ENCODE measurements at regions of chr2 and their contacts with region 1.

Region 1: GRCh38 chr2:205776139-205776538 is 93.8 kb downstream of the NRP2 start:
- DNase-seq: peak; percentile 55
- ATAC-seq: peak; percentile 98
- H3K4me3 ChIP-seq: no peak overlapping the region
- H3K27ac ChIP-seq: no peak overlapping the region
- H3K4me1 ChIP-seq: peaks cover 0 to 3% of the 10 kb centered on the region in 2 experiments; a peak in 1 of 4 replicates
- H3K27me3 ChIP-seq: peaks cover 21% of the 10 kb centered on the region; the same call in 1 of the 2 replicates
- CTCF ChIP-seq: peak; percentile 83 to 92 (median 89)
- POLR2A ChIP-seq: no peak
- RAD21 ChIP-seq: peak; percentile 84

Region 2: GRCh38 chr2:205484764-205485163 is 291.4 kb before region 1 on chr2:
- CTCF ChIA-PET with region 1: no interaction called
- POLR2A ChIA-PET with region 1: no interaction called
- RAD21 ChIA-PET with region 1: no interaction called
- intact Hi-C with region 1: no loop called
- DNase-seq: no peak
- ATAC-seq: no peak
- H3K4me3 ChIP-seq: no peak overlapping the region
- H3K27ac ChIP-seq: no peak overlapping the region
- H3K4me1 ChIP-seq: no peaks in the 10 kb centered on the region
- H3K27me3 ChIP-seq: peaks cover 4% of the 10 kb centered on the region; the same call in 1 of the 2 replicates
- CTCF ChIP-seq: no peak
- POLR2A ChIP-seq: no peak
- RAD21 ChIP-seq: no peak

Region 3: GRCh38 chr2:205612636-205613035 is 163.5 kb before region 1 on chr2:
- CTCF ChIA-PET with region 1: no interaction called
- POLR2A ChIA-PET with region 1: no interaction called
- RAD21 ChIA-PET with region 1: no interaction called
- intact Hi-C with region 1: no loop called
- DNase-seq: no peak
- ATAC-seq: no peak
- H3K4me3 ChIP-seq: no peak overlapping the region
- H3K27ac ChIP-seq: no peak overlapping the region
- H3K4me1 ChIP-seq: no peaks in the 10 kb centered on the region
- H3K27me3 ChIP-seq: peaks cover 41% of the 10 kb centered on the region
- CTCF ChIP-seq: no peak
- POLR2A ChIP-seq: no peak
- RAD21 ChIP-seq: no peak

Region 4: DNA sequence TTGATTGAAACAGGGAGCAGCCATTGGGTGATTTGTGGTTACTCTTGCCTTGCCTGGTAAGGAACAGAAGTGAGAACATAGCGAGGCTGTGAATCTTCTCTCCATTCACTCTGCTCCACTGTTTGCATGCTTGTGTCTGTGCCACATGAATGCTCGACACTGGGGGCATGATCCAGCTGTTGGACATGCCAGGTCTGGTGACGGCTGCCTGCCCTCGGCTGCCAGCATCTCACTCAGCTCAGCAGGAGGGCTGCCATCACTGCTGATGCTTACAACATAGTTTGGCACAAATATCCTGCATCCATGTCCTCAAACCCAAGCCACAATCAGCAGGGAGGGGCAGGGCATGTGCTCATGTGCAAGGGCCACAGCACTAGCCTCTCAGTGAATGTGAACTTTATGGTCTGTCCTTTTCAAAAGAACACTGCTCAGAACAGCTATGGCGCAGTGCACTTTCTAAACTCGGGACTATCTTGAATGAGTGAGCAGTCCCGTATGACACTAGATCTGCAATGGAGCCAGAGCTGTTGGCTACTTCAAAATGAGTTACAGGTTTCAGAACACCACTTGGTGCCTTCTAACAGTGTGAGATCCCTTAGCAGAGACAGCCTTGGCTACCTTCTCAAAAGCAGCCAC is 32.5 kb after region 1 on chr2:
- CTCF ChIA-PET with region 1: no interaction called
- POLR2A ChIA-PET with region 1: no interaction called
- RAD21 ChIA-PET with region 1: no interaction called
- intact Hi-C with region 1: loop called (anchors 1 kb)
- DNase-seq: no peak
- ATAC-seq: no peak
- H3K4me3 ChIP-seq: no peak overlapping the region
- H3K27ac ChIP-seq: no peak overlapping the region
- H3K4me1 ChIP-seq: no peaks in the 10 kb centered on the region
- H3K27me3 ChIP-seq: 0 out of 2 replicates have a peak, but pooled peaks cover 5% of the 10 kb centered on the region
- CTCF ChIP-seq: no peak
- POLR2A ChIP-seq: no peak
- RAD21 ChIP-seq: no peak

Region 5: DNA sequence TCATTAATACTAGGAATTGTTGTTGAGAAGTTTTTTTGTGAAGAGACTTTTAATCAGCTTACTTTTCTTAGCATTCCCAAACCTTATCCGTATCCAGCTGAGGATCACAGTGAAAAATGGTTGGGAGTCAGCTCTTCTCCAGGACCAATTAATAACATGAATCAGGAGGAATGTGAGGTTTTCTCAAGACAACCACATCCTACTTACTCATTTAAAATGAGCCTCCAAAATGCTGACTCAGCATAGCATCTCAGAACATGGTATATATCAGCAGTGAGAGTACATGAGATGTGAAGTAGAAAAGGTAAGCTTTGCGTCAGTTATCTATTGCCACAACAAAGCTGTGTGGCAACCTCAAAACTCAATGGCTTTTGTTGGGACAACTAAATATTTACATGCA is 46.4 kb after region 1 on chr2:
- CTCF ChIA-PET with region 1: no interaction called
- POLR2A ChIA-PET with region 1: no interaction called
- RAD21 ChIA-PET with region 1: no interaction called
- intact Hi-C with region 1: no loop called
- DNase-seq: no peak
- ATAC-seq: no peak
- H3K4me3 ChIP-seq: no peak overlapping the region
- H3K27ac ChIP-seq: no peak overlapping the region
- H3K4me1 ChIP-seq: no peaks in the 10 kb centered on the region
- H3K27me3 ChIP-seq: no peaks in the 10 kb centered on the region; the same call in 1 of the 2 replicates
- CTCF ChIP-seq: no peak
- POLR2A ChIP-seq: no peak
- RAD21 ChIP-seq: no peak

Region 6: DNA sequence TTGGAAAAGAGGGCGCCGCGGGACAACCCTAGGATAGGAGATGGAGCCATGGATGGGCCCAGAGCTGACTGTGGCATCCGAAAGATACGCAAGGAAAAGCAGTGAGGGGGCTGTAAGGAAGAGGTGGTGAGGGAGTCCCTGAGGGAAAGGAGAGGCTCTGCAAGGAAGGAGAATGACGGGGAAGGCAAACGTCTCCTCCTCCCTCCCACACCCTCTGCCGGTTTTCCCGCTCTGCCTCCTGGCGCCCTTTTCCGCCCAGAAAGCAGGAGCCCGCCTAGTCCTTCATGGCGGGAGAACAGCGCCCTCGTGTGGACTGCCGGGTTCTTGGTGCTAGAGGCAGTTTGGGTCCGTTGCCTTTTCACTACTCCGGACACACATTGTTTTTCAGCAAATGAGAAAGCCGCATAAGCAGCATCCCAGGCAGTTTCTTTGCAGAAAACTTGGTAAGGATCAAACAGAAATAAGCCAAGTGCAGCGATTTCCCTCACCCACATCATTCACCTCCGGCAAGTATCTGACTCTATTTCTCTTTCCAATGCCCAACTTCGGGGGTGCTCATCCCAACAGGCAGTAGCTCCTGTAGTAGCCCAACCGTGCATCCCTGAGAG is 109.5 kb after region 1 on chr2:
- CTCF ChIA-PET with region 1: interaction called, 8 read pairs
- POLR2A ChIA-PET with region 1: no interaction called
- RAD21 ChIA-PET with region 1: no interaction called
- intact Hi-C with region 1: loop called (anchors 1 kb)
- DNase-seq: peak; percentile 68
- ATAC-seq: peak; percentile 99
- H3K4me3 ChIP-seq: no peak overlapping the region
- H3K27ac ChIP-seq: no peak overlapping the region
- H3K4me1 ChIP-seq: peaks cover 0 to 3% of the 10 kb centered on the region in 2 experiments; a peak in 2 of 4 replicates
- H3K27me3 ChIP-seq: no peaks in the 10 kb centered on the region
- CTCF ChIP-seq: peak; percentile 92 to 97 (median 94)
- POLR2A ChIP-seq: no peak
- RAD21 ChIP-seq: peak; percentile 94

Region 7: DNA sequence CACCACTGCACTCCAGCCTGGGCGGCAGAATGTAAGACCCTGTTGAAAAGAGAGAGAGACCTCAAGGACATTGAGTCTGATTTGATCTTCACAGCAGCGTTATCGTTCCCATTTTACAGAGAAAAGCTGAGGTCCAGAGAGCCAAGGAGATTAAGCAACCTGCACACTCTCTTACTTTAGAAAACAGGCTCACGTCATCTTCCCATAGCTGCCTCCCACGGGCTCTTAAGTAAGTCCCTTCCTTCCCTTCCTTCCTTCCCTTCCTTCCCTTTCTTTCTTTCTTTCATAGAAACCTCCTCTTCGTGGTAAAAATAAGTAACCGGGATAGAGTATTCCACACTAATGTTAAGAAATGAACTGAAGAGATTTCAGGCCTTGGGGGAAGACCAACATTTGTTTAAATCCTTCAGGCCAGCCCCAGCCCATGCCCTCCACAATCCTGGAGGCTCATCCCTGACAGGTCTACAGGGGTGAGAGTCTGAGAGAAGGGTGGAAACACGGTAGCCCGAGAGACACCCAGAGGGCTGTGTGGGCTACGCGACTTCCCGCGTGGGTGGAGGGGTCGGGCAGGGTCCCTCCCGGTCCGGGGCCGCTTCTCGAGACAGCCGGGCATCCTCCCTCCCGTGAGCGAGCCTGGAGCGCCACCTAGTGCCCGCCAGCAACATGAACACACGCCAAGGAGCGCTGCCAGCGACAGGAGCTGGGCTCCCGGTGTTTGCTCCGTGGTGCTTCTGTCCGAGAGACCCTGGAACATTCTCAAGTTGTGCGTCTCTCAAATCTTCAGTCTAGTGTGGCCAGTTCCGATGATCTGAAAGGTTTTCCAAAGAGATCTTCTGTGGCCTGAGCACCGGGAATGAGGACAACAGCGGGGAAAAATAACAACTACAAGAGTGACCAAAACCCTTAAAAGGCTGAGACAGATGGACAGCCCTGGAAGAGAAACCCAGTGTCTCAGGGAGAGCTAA is 149.5 kb after region 1 on chr2:
- CTCF ChIA-PET with region 1: interaction called, 14 read pairs
- POLR2A ChIA-PET with region 1: no interaction called
- RAD21 ChIA-PET with region 1: no interaction called
- intact Hi-C with region 1: loop called (anchors 2 kb)
- DNase-seq: no peak
- ATAC-seq: peak; percentile 99
- H3K4me3 ChIP-seq: peak overlapping the region; percentile 9 to 19; a peak in 1 of 4 replicates
- H3K27ac ChIP-seq: no peak overlapping the region
- H3K4me1 ChIP-seq: peaks cover 0 to 8% of the 10 kb centered on the region in 2 experiments; a peak in 2 of 4 replicates
- H3K27me3 ChIP-seq: peaks cover 25% of the 10 kb centered on the region
- CTCF ChIP-seq: peak; percentile 85 to 93 (median 90)
- POLR2A ChIP-seq: no peak
- RAD21 ChIP-seq: peak; percentile 95

Region 8: GRCh38 chr2:205947621-205948495 is 171.7 kb after region 1 on chr2:
- CTCF ChIA-PET with region 1: no interaction called
- POLR2A ChIA-PET with region 1: no interaction called
- RAD21 ChIA-PET with region 1: no interaction called
- intact Hi-C with region 1: loop called (anchors 5 kb)
- DNase-seq: peak; percentile 33
- ATAC-seq: peak; percentile 85
- H3K4me3 ChIP-seq: no peak overlapping the region
- H3K27ac ChIP-seq: no peak overlapping the region
- H3K4me1 ChIP-seq: peaks cover 0 to 17% of the 10 kb centered on the region in 2 experiments; a peak in 2 of 4 replicates
- H3K27me3 ChIP-seq: no peaks in the 10 kb centered on the region
- CTCF ChIP-seq: peak; percentile 81 to 95 (median 91)
- POLR2A ChIP-seq: no peak
- RAD21 ChIP-seq: peak; percentile 88